A673 (cell line): ENCODE measurements at regions of chr12 and their contacts with region 1.

Region 1: GRCh38 chr12:110782094-110782493 is 39.4 kb upstream of the PPP1CC start:
- DNase-seq: no peak
- H3K4me3 ChIP-seq: no peak overlapping the region
- H3K27ac ChIP-seq: peak overlapping the region; percentile 93
- H3K4me1 ChIP-seq: peaks cover 28% of the 10 kb centered on the region
- H3K27me3 ChIP-seq: no peaks in the 10 kb centered on the region
- CTCF ChIP-seq: no peak

Region 2: DNA sequence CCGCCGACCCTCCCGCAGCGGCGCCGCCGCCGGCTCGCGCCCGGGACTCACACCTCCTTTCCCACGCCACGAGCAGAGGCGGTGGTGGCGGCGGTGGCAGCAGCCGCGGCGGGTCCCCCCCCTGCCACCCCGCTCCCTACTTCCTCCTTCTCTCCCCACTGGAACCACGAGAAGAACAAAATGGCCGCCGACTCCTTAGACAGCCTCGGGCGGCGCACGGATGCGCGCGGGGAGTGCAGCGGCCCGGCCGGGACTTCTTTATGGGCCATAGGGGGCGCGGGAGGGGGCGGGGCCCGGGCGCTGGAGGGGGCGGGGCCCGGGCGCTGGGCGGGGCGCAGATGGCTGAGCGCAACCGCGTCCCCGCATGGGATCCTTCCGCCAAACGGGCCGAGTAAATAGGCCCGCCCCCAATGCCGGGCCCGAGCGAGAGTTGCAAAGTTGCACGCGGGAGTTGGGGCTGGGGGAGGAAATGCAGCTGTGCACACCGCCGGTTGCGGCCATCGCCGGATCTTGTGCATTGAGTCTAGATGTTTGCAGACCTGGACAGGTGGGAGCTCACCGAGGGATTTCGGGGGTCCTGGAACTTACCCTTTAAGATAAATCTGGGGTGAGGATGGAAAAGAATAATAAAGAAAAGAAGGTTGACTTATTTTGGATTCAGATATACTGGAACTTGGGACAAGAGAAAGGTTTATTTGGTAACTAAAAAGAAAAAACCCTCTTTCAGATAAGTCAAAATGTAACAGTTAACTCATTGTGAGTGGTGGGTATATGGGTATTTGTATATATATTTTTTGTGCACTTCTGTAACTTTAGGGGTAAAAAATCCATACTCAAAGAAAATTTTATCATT is 39.1 kb before region 1 on chr12 and contains the start of gene PPP1CC:
- CTCF ChIA-PET with region 1: no interaction called
- POLR2A ChIA-PET with region 1: no interaction called
- intact Hi-C with region 1: loop called (anchors 2 kb)
- DNase-seq: peak; percentile 98
- H3K4me3 ChIP-seq: peak within 1 kb of the TSS; percentile 84
- H3K27ac ChIP-seq: peak within 1 kb of the TSS; percentile 93
- H3K4me1 ChIP-seq: peaks cover 33% of the 10 kb centered on the region
- H3K27me3 ChIP-seq: no peaks in the 10 kb centered on the region
- CTCF ChIP-seq: no peak
- total RNA-seq, gene PPP1CC: 268 and 274 TPM in 2 replicates